Activated CD4-positive, alpha-beta memory T cell treated with anti-CD3 and anti-CD28 coated beads for 36 hours (primary cell): ENCODE measurements at regions of chr3 and their contacts with region 1.

Region 1: GRCh38 chr3:31105438-31106077 is 211.1 kb upstream of the GADL1 start:
- DNase-seq: peak; percentile 51
- H3K4me3 Mint-ChIP-seq: no peak overlapping the region
- H3K27ac Mint-ChIP-seq: no peak overlapping the region
- H3K4me1 Mint-ChIP-seq: peaks cover 37% of the 10 kb centered on the region
- H3K27me3 Mint-ChIP-seq: no peaks in the 10 kb centered on the region

Region 2: DNA sequence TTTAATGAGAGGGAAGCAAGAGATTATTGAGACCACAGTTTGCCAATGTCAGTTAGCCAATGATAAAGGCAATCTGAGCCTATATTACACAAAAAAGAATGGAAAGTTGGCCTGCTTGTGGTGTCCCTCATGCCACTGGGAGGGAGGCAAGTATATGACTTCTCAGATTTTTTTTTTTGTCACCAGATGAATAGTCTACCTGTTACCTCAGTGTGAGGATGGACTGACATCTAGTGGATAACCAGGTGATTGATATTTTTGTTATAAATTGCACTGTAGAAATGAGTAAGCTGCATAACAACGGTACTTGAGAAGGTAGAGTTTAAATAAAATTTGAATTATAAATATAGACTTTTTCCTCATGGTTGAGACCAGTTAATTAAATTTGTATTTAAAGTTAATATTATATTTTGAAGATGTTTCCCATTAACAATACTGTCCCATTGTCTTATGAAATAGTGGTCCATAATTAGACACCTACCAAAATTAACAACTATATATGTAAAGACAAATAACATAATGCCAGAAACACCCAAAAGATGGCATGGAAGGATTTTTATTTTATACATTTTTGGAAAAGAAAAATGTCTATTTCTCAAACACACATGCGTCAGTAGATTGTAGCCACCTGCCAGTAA is 26.7 kb after region 1 on chr3:
- CTCF ChIA-PET with region 1: no interaction called
- POLR2A ChIA-PET with region 1: no interaction called
- intact Hi-C with region 1: no loop called
- DNase-seq: no peak
- H3K4me3 Mint-ChIP-seq: no peak overlapping the region
- H3K27ac Mint-ChIP-seq: no peak overlapping the region
- H3K4me1 Mint-ChIP-seq: peaks cover 4% of the 10 kb centered on the region
- H3K27me3 Mint-ChIP-seq: no peaks in the 10 kb centered on the region

Region 3: GRCh38 chr3:31274261-31275024 is 168.9 kb after region 1 on chr3:
- CTCF ChIA-PET with region 1: no interaction called
- POLR2A ChIA-PET with region 1: no interaction called
- intact Hi-C with region 1: loop called (anchors 5 kb)
- DNase-seq: no peak
- H3K4me3 Mint-ChIP-seq: no peak overlapping the region
- H3K27ac Mint-ChIP-seq: no peak overlapping the region
- H3K4me1 Mint-ChIP-seq: peaks cover 13% of the 10 kb centered on the region
- H3K27me3 Mint-ChIP-seq: no peaks in the 10 kb centered on the region